Activated CD8-positive, alpha-beta T cell treated with anti-CD3 and anti-CD28 coated beads for 36 hours (primary cell): ENCODE measurements at regions of chr12 and their contacts with region 1.

Region 1: DNA sequence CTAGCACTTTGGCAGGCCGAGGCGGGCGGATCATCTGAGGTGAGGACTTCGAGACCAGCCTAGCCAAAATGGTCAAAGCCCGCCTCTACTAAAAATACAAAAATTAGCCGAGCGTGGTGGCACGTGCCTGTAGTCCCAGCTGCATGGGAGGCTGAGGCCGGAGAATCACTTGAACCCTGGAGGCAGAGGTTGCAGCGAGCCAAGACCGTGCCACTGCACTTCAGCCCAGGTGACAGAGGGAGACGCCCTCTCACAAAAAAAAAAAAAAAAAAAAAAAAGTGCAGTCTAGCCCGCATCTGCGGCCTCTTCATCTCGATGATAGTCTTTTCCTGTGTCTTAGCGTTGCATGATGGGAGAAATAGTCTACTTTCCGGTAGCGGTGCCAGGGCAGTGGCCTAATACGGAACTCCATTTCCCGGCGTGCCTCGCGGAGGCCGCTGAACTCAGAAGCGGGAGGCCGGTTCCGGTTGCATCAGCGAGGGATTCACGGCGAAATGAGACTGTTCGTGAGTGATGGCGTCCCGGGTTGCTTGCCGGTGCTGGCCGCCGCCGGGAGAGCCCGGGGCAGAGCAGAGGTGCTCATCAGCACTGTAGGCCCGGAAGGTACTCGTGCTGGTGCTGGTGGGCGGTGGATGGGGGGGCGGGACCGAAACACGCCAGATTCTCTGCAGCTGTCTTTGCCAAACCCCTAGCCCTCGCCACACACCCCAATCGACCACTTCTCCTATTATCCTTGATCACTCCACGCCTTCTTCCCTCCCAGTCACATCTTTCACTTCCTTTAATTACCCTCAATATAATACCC is at the start of gene MARS1:
- DNase-seq: peak; percentile 97
- ATAC-seq: peak; percentile 98
- H3K4me3 Mint-ChIP-seq: peak within 1 kb of the TSS; percentile 97
- H3K27ac Mint-ChIP-seq: peak within 1 kb of the TSS; percentile 95
- H3K4me1 Mint-ChIP-seq: peaks cover 33% of the 10 kb centered on the region
- H3K27me3 Mint-ChIP-seq: no peaks in the 10 kb centered on the region
- CTCF ChIP-seq: no peak
- total RNA-seq, gene MARS1: 343 to 345 TPM

Region 2: DNA sequence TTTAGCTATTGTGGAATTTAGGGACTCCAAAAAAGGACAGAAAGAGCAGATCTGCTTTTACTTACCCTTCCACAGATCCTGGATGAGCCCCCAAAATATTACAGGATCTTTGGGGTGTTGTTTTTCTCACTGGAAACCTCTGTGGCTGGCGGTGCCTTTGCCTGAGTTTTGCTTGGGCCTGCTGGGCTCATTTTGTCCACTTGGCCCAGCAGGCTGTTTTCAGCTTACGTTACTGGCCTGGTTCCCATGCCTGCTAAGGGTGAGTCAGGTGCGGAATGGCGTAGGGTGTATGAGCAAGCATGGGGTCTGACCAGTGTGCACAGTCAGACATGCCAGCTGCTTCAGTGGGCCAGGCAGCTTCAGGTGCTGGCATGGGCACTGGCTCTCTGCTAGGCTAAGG is 678.8 kb before region 1 on chr12:
- CTCF ChIA-PET with region 1: no interaction called
- POLR2A ChIA-PET with region 1: no interaction called
- intact Hi-C with region 1: no loop called
- DNase-seq: no peak
- ATAC-seq: no peak
- H3K4me3 Mint-ChIP-seq: no peak overlapping the region
- H3K27ac Mint-ChIP-seq: no peak overlapping the region
- H3K4me1 Mint-ChIP-seq: no peaks in the 10 kb centered on the region
- H3K27me3 Mint-ChIP-seq: peaks cover 2% of the 10 kb centered on the region
- CTCF ChIP-seq: no peak

Region 3: DNA sequence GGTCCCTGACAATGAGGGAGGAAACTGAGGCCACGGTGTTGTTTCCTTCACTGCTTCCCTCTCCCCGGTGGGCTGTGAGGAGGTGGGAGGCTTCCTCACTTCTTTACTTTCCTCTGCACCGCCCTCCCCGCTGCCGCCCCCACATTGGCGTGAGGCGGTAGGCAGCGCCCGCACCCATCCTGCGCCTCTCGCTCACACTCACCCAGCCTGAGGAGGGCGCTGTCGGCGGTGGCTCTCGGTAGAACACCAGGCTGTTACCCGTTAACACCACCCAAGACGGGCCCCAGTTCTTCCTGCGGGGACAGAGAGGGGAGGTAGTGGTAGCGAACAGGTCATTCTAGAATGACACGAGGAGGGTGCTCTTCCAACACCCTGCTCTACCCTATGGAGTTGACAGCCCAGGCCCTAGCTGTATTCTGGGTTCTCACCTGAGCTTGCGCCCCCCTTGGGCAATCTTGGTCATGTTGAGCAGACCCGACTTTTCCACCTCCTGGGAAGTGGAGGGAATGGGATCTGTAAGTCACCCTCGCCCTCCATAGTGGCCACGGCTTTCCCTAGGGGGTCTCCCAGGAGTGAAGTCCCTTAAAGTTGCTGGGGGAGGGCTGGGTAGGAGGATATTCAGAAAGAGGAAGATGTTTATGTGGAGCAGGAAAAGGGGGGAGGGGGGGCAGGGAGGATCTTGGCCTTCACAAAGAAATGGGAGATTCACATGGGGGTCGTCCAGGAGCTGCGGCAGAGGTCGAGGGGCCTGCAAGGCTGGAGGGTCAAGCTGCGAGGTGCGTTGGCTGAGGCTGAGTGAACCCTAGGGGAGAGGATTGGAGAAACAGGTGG is 11.4 kb before region 1 on chr12:
- CTCF ChIA-PET with region 1: interaction called, 5 read pairs
- POLR2A ChIA-PET with region 1: interaction called, 13 read pairs
- intact Hi-C with region 1: no loop called
- DNase-seq: peak; percentile 93
- ATAC-seq: peak; percentile 67
- H3K4me3 Mint-ChIP-seq: peak overlapping the region; percentile 89
- H3K27ac Mint-ChIP-seq: peak overlapping the region; percentile 99
- H3K4me1 Mint-ChIP-seq: peaks cover 58% of the 10 kb centered on the region
- H3K27me3 Mint-ChIP-seq: no peaks in the 10 kb centered on the region
- CTCF ChIP-seq: peak; percentile 95

Region 4: DNA sequence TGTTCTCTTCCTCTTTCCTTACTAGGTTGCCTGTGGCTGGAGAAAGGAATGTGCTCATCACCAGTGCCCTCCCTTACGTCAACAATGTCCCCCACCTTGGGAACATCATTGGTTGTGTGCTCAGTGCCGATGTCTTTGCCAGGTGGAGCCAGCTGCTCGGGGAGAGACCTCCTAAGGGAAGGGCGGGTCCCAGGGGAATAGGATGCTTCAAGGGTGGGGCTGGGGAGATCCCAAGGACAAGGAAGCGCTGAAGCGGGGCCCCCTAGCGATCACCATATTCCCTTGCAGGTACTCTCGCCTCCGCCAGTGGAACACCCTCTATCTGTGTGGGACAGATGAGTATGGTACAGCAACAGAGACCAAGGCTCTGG is 10.3 kb after region 1 on chr12:
- CTCF ChIA-PET with region 1: no interaction called
- POLR2A ChIA-PET with region 1: interaction called, 26 read pairs
- intact Hi-C with region 1: no loop called
- DNase-seq: no peak
- ATAC-seq: no peak
- H3K4me3 Mint-ChIP-seq: no peak overlapping the region
- H3K27ac Mint-ChIP-seq: no peak overlapping the region
- H3K4me1 Mint-ChIP-seq: peaks cover 5% of the 10 kb centered on the region
- H3K27me3 Mint-ChIP-seq: no peaks in the 10 kb centered on the region
- CTCF ChIP-seq: no peak